HCT116 (cell line): ENCODE measurements at regions of chr5 and their contacts with region 1.

Region 1: DNA sequence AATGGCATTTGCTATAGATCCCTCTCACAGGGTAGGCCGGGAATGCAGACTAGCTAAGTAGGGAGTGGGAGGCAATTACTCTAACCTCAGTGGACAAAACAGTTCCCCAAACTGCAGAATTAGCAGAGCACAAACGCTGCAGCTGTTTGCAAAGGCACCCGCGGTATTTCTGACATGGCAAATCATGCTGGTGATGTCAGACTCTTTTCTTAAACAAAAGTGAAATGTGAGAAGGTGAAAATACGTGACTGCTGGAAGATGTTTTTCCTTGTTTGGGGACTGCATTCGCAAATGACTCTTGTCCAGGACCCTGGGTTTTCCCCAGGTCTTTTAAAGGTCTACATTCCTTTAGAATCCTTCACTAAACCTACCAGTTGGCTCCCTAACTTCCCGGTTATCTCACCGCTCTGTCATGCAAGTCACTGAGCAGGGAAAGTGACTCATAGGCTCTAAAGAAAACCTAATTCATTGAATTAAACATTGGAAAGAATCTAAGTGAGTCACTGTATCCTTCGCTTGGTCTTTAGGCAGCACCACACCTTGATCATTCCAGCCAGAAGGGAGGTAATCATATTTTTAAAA is 91.5 kb upstream of the DNAH5 start:
- DNase-seq: peak; percentile 92
- ATAC-seq: peak; percentile 68
- H3K4me3 ChIP-seq: peak overlapping the region; percentile 24 to 44
- H3K27ac ChIP-seq: peak overlapping the region; percentile 96
- H3K4me1 ChIP-seq: peaks cover 59 to 90% of the 10 kb centered on the region in 2 experiments
- H3K27me3 ChIP-seq: no peaks in the 10 kb centered on the region
- CTCF ChIP-seq: no peak
- POLR2A ChIP-seq: no peak
- RAD21 ChIP-seq: peak; percentile 11; the same call in 1 of the 2 replicates

Region 2: DNA sequence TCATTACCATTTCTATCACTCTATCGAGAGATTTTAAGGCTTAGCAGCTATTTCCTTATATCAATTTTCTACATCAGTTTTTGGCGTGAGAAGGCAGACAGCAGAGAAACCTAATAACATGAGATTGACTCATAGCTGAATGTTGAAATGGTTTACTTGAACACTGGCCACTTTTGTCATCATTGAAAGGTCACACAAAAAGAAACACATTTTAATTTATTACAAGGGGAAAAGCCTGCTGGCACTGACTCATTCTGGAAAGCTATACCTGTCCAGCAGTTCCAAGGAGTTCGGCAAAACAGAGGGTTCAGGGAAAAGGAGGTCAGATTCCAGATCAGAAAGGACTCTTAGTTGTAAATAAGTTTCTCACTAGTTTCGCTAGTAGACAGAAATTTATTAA is 657.9 kb before region 1 on chr5:
- CTCF ChIA-PET with region 1: no interaction called
- POLR2A ChIA-PET with region 1: no interaction called
- RAD21 ChIA-PET with region 1: no interaction called
- intact Hi-C with region 1: no loop called
- DNase-seq: no peak
- ATAC-seq: no peak
- H3K4me3 ChIP-seq: no peak overlapping the region
- H3K27ac ChIP-seq: no peak overlapping the region
- H3K4me1 ChIP-seq: no peaks in the 10 kb centered on the region
- H3K27me3 ChIP-seq: no peaks in the 10 kb centered on the region
- CTCF ChIP-seq: no peak
- POLR2A ChIP-seq: no peak
- RAD21 ChIP-seq: no peak

Region 3: GRCh38 chr5:14142827-14143548 is 107.0 kb after region 1 on chr5 and contains the start of gene TRIO:
- CTCF ChIA-PET with region 1: no interaction called
- POLR2A ChIA-PET with region 1: no interaction called
- RAD21 ChIA-PET with region 1: no interaction called
- intact Hi-C with region 1: loop called (anchors 10 kb)
- DNase-seq: peak; percentile 77
- ATAC-seq: peak; percentile 78
- H3K4me3 ChIP-seq: peak within 1 kb of the TSS; percentile 72 to 97
- H3K27ac ChIP-seq: peak within 1 kb of the TSS; percentile 94
- H3K4me1 ChIP-seq: peaks cover 12 to 33% of the 10 kb centered on the region in 2 experiments
- H3K27me3 ChIP-seq: no peaks in the 10 kb centered on the region; the same call in 1 of the 2 replicates
- CTCF ChIP-seq: peak in 2 of 3 experiments; percentile 48 to 55; a peak in 4 of 6 replicates
- POLR2A ChIP-seq: peak; percentile 74
- RAD21 ChIP-seq: peak; percentile 31; the same call in 1 of the 2 replicates
- total RNA-seq, gene TRIO: 68.4 TPM

Region 4: GRCh38 chr5:14168144-14168792 is 132.3 kb after region 1 on chr5:
- CTCF ChIA-PET with region 1: no interaction called
- POLR2A ChIA-PET with region 1: no interaction called
- RAD21 ChIA-PET with region 1: no interaction called
- intact Hi-C with region 1: loop called (anchors 5 kb)
- DNase-seq: no peak
- ATAC-seq: no peak
- H3K4me3 ChIP-seq: no peak overlapping the region
- H3K27ac ChIP-seq: no peak overlapping the region
- H3K4me1 ChIP-seq: peaks cover 53 to 72% of the 10 kb centered on the region in 2 experiments
- H3K27me3 ChIP-seq: no peaks in the 10 kb centered on the region
- CTCF ChIP-seq: no peak
- POLR2A ChIP-seq: no peak
- RAD21 ChIP-seq: no peak

Region 5: GRCh38 chr5:14185326-14186058 is 149.5 kb after region 1 on chr5:
- CTCF ChIA-PET with region 1: no interaction called
- POLR2A ChIA-PET with region 1: no interaction called
- RAD21 ChIA-PET with region 1: no interaction called
- intact Hi-C with region 1: loop called (anchors 5 kb)
- DNase-seq: no peak
- ATAC-seq: peak; percentile 60
- H3K4me3 ChIP-seq: peak overlapping the region; percentile 6 to 44; a peak in 2 of 4 replicates
- H3K27ac ChIP-seq: peak overlapping the region; percentile 81
- H3K4me1 ChIP-seq: peaks cover 50 to 88% of the 10 kb centered on the region in 2 experiments
- H3K27me3 ChIP-seq: no peaks in the 10 kb centered on the region
- CTCF ChIP-seq: no peak
- POLR2A ChIP-seq: no peak
- RAD21 ChIP-seq: no peak

Region 6: DNA sequence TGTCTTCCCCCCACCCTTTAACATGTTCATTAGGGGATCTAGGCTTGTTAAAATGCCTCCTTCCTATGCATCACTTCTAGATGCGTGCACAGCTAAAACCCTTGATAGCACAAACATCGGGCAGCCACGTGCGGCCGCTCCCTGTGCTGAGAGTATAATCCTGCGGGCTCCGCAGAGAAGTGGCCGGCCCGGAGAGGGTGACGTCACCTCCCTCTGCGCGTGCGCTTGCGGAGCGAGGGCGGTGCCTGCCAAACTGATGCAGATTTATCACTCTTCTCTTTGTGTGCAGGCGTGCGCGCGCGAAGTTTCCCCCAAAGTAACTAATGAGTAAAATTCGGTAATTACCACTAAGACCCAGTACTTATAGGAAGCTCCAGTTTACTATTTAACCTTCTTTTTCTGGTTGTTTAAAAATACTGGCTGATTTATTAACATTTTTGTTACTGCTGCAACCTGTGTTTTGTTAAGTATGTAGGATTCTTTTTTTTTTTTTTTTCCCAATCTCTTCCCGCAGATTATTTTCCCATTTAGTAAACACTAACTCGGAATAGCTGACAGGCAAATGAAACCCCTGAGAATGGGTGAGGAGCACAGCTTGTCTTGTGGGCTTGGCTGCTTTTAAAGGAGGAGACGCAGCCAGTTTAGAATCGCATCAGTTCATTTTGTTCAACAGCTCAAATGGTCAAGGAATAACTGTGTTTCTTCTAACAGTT is 228.8 kb after region 1 on chr5:
- CTCF ChIA-PET with region 1: interaction called, 5 read pairs
- POLR2A ChIA-PET with region 1: interaction called, 3 read pairs
- RAD21 ChIA-PET with region 1: no interaction called
- intact Hi-C with region 1: loop called (anchors 5 kb)
- DNase-seq: peak; percentile 71
- ATAC-seq: peak; percentile 74
- H3K4me3 ChIP-seq: peak overlapping the region; percentile 15 to 44; a peak in 3 of 4 replicates
- H3K27ac ChIP-seq: peak overlapping the region; percentile 34; the same call in 1 of the 2 replicates
- H3K4me1 ChIP-seq: peaks cover 51 to 80% of the 10 kb centered on the region in 2 experiments
- H3K27me3 ChIP-seq: no peaks in the 10 kb centered on the region
- CTCF ChIP-seq: no peak
- POLR2A ChIP-seq: peak; percentile 80
- RAD21 ChIP-seq: no peak